Activated CD4-positive, alpha-beta T cell treated with anti-CD3 and anti-CD28 coated beads for 36 hours (primary cell): ENCODE measurements at regions of chr17 and their contacts with region 1.

Region 1: DNA sequence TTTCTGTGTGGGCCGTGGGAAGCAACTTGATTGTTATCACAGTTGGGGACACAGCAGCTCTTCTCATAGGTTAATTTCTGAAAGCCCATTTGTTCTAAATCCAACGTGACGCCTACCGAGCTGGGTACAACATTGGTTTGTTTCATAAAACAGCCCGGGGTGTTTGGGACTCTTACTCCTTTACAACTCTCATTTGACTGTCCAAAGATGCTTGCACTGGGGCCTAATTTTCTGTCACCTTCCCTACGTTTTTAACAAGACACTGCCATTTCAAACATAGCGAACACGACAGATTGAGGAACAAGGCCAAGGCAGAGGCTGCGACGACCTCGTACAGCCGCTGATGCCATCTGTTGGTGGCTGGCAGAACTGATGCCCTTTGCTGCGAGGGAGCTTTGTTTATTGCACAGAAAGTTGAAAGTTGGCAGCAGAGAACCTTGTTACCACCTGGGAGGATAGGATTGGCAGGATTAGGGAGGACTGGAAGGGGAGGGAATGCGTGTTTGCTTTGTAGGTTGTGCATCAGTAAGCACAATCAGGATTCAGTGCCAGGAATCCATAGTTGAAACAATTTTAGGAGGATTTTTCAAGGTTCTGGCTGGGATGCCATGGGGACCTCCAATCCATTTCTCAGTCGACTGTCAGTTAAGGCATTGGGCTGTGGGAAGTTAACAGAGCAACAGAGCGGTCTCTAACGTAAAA is 98.3 kb downstream of the PITPNC1 start:
- DNase-seq: peak; percentile 92
- ATAC-seq: peak; percentile 65
- H3K4me3 Mint-ChIP-seq: peak overlapping the region; percentile 65
- H3K27ac Mint-ChIP-seq: peak overlapping the region; percentile 91
- H3K4me1 Mint-ChIP-seq: peaks cover 66% of the 10 kb centered on the region
- H3K27me3 Mint-ChIP-seq: no peaks in the 10 kb centered on the region

Region 2: DNA sequence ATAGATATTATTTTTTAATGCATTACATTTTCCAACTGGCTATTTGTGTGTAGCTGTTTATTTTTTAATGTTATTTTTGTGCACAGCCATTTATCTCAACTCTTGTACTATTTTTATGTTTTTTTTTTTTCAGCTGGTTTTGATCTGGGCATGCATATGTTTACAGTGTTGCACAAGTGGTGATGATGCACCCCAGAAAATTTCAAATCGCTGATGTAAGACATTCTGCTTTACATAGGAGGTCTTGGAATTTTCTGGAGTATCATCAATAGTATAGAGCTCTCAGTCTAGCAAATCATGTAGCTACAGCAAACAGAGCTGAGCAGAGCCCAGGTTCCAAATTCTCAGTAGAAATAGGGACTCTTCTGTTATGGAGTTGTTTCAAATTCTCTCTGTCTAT is 610.2 kb before region 1 on chr17:
- CTCF ChIA-PET with region 1: no interaction called
- POLR2A ChIA-PET with region 1: no interaction called
- intact Hi-C with region 1: no loop called
- DNase-seq: no peak
- ATAC-seq: no peak
- H3K4me3 Mint-ChIP-seq: no peak overlapping the region
- H3K27ac Mint-ChIP-seq: no peak overlapping the region
- H3K4me1 Mint-ChIP-seq: no peaks in the 10 kb centered on the region
- H3K27me3 Mint-ChIP-seq: peaks cover 21% of the 10 kb centered on the region

Region 3: GRCh38 chr17:67366193-67367157 is 108.9 kb before region 1 on chr17 and contains the start of gene PSMD12:
- CTCF ChIA-PET with region 1: interaction called, 11 read pairs
- POLR2A ChIA-PET with region 1: no interaction called
- intact Hi-C with region 1: no loop called
- DNase-seq: peak; percentile 96
- ATAC-seq: peak; percentile 78
- H3K4me3 Mint-ChIP-seq: peak within 1 kb of the TSS; percentile 94
- H3K27ac Mint-ChIP-seq: peak within 1 kb of the TSS; percentile 96
- H3K4me1 Mint-ChIP-seq: peaks cover 43% of the 10 kb centered on the region
- H3K27me3 Mint-ChIP-seq: no peaks in the 10 kb centered on the region
- total RNA-seq, gene PSMD12: 100 to 101 TPM

Region 4: GRCh38 chr17:67421869-67422273 is 53.5 kb before region 1 on chr17:
- CTCF ChIA-PET with region 1: interaction called, 18 read pairs
- POLR2A ChIA-PET with region 1: interaction called, 7 read pairs
- intact Hi-C with region 1: loop called in 1 of 2 experiments (anchors 1 kb)
- DNase-seq: peak; percentile 70
- ATAC-seq: peak; percentile 96
- H3K4me3 Mint-ChIP-seq: peak overlapping the region; percentile 20
- H3K27ac Mint-ChIP-seq: peak overlapping the region; percentile 88
- H3K4me1 Mint-ChIP-seq: peaks cover 75% of the 10 kb centered on the region
- H3K27me3 Mint-ChIP-seq: no peaks in the 10 kb centered on the region

Region 5: GRCh38 chr17:67441052-67441927 is 34.1 kb before region 1 on chr17:
- CTCF ChIA-PET with region 1: interaction called, 55 read pairs
- POLR2A ChIA-PET with region 1: interaction called, 14 read pairs
- intact Hi-C with region 1: loop called (anchors 1 to 2 kb)
- DNase-seq: peak; percentile 85
- ATAC-seq: peak; percentile 91
- H3K4me3 Mint-ChIP-seq: peak overlapping the region; percentile 76
- H3K27ac Mint-ChIP-seq: peak overlapping the region; percentile 98
- H3K4me1 Mint-ChIP-seq: peaks cover 80% of the 10 kb centered on the region
- H3K27me3 Mint-ChIP-seq: no peaks in the 10 kb centered on the region

Region 6: DNA sequence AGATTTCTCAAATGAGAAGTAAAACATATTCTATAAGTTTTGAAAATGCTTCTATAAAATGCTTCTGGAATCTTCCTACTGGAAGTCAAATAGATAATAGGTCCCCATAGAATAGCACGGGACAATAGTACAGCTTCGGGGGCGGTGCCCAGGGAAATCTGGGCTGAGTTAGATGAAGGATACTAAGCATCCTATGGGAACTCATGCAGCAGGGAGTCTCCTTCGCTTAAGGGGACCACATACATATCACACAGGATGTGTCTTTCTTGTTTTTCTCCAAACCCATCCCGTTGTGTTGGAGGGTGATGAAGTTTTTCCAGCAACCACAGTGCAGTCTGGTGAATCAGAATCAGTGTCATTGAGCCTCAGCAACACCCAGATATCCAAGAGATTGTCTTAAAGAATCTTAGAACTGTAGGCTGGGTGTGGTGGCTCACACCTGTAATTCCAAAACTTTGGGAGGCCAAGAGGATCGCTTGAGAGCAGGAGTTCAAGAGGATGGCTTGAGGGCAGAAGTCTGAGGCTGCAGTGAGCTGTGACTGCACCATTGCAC is 14.1 kb before region 1 on chr17:
- CTCF ChIA-PET with region 1: interaction called, 36 read pairs
- POLR2A ChIA-PET with region 1: no interaction called
- intact Hi-C with region 1: no loop called
- DNase-seq: peak; percentile 62
- ATAC-seq: peak; percentile 78
- H3K4me3 Mint-ChIP-seq: no peak overlapping the region
- H3K27ac Mint-ChIP-seq: peak overlapping the region; percentile 93
- H3K4me1 Mint-ChIP-seq: peaks cover 68% of the 10 kb centered on the region
- H3K27me3 Mint-ChIP-seq: no peaks in the 10 kb centered on the region

Region 7: DNA sequence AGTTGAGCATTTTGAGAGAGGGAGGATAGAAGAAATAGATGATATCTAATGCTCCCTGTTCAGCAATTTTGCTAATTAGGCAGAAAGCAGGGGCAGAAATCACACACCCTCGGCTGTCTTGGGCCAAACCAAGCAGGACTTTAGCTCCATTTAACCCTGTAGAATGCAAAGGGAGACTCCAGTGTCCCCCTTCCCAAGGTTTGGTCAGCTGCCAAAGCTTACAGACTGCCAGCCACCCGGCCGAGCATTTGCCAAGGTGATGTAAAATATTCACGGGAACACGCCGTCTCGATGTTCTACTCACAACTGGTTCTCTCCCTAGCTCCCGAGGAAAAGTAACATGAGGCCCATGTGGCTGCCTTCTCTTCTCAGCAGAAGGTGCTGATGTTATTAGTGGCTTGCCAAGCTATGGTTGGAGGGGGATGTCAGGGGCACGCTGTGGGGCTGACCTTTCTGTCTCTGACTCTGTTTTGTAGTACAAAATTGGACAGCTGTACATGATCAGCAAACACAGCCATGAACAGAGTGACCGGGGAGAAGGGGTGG is 57.0 kb after region 1 on chr17:
- CTCF ChIA-PET with region 1: no interaction called
- POLR2A ChIA-PET with region 1: no interaction called
- intact Hi-C with region 1: no loop called
- DNase-seq: no peak
- ATAC-seq: no peak
- H3K4me3 Mint-ChIP-seq: no peak overlapping the region
- H3K27ac Mint-ChIP-seq: no peak overlapping the region
- H3K4me1 Mint-ChIP-seq: peaks cover 9% of the 10 kb centered on the region
- H3K27me3 Mint-ChIP-seq: no peaks in the 10 kb centered on the region

Region 8: GRCh38 chr17:67689534-67690177 is 214.3 kb after region 1 on chr17:
- CTCF ChIA-PET with region 1: interaction called, 5 read pairs
- POLR2A ChIA-PET with region 1: no interaction called
- intact Hi-C with region 1: loop called (anchors 1 to 10 kb)
- DNase-seq: peak; percentile 58
- ATAC-seq: no peak
- H3K4me3 Mint-ChIP-seq: no peak overlapping the region
- H3K27ac Mint-ChIP-seq: no peak overlapping the region
- H3K4me1 Mint-ChIP-seq: peaks cover 3% of the 10 kb centered on the region
- H3K27me3 Mint-ChIP-seq: no peaks in the 10 kb centered on the region

Region 9: DNA sequence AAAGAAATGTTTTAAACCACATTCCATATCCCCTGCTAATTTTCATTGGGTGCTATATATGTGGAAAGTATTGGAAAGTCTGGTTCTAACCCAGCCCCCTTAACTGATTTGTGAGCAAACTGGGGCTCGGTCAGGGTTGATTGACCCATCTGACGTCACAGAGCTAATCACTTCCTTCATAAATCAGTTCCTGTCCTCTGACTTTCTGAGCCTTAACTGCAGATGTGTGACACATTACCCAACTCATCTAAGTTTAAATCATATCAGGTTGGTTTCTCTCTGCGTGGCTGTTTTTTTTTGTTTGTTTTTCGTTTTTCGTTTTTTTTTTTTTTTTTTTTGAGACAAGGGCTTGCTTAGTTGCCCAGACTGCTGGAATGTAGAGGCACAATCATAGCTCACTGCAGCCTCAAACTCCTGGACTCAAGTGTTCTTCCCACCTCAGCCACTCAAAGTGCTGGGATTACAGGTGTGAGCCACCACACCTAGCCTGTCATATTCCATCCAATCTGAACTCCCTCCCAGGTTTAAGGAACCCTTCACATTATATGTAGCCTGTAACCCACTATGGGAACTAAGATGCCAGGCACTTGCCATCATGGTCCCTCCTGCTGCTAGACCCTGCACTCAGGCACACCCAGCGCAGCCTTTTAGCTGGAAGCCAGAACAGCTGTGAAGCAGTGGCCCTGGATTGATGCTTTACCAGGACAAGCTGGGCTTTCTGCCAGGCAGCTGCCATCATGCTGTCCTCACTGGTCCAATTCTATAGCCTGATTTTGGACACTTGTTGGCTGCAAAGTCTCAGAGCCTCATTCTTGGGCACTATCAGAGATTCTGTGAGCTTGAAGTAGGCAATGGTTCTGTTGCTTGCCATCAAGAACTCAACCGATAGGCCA is 343.0 kb after region 1 on chr17:
- CTCF ChIA-PET with region 1: no interaction called
- POLR2A ChIA-PET with region 1: no interaction called
- intact Hi-C with region 1: no loop called
- DNase-seq: no peak
- ATAC-seq: no peak
- H3K4me3 Mint-ChIP-seq: no peak overlapping the region
- H3K27ac Mint-ChIP-seq: no peak overlapping the region
- H3K4me1 Mint-ChIP-seq: no peaks in the 10 kb centered on the region
- H3K27me3 Mint-ChIP-seq: peaks cover 8% of the 10 kb centered on the region